Testis (tissue), 5 donors: ENCODE measurements at regions of chr16 and their contacts with region 1.

Region 1: DNA sequence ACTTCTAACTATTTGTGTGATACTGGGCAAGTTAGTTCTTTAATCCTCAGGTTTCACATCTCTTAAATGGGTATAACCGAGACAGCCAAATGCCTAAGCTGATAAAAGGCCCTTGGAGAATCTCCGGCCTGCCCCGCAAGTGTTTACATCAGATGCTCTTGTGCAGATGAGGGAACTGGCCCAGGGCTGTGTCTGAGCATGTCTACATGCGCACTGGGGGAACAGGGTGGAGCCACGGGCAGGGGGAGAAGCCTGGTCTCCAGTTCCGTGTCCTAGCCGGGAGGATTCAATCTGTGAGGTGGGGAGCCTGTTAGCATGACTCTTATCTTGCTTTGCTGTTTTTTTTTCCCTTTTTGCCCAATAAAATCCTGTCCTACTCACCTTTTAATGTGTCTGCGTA is 222.9 kb downstream of the CDH8 start:
- DNase-seq: peak; percentile 54
- H3K4me3 ChIP-seq: peak overlapping the region in 1 of 2 donors; percentile 14
- H3K27ac ChIP-seq: no peak overlapping the region
- H3K4me1 ChIP-seq: no peaks in the 10 kb centered on the region
- H3K27me3 ChIP-seq: no peaks in the 10 kb centered on the region
- CTCF ChIP-seq: no peak
- POLR2A ChIP-seq: no peak

Region 2: GRCh38 chr16:61780161-61780560 is 33.2 kb before region 1 on chr16:
- intact Hi-C with region 1: loop called (anchors 2 kb)
- DNase-seq: no peak
- H3K4me3 ChIP-seq: no peak overlapping the region
- H3K27ac ChIP-seq: no peak overlapping the region
- H3K4me1 ChIP-seq: no peaks in the 10 kb centered on the region
- H3K27me3 ChIP-seq: no peaks in the 10 kb centered on the region
- CTCF ChIP-seq: no peak
- POLR2A ChIP-seq: no peak